Calu3 (cell line): ENCODE measurements at regions of chr10 and their contacts with region 1.

Region 1: GRCh38 chr10:60172363-60172990 is 217.2 kb downstream of the ANK3 start:
- DNase-seq: peak; percentile 52
- H3K4me3 Mint-ChIP-seq: no peak overlapping the region
- H3K27ac Mint-ChIP-seq: peak overlapping the region; percentile 67
- H3K4me1 Mint-ChIP-seq: peaks cover 64% of the 10 kb centered on the region
- H3K27me3 Mint-ChIP-seq: no peaks in the 10 kb centered on the region
- CTCF ChIP-seq: no peak

Region 2: GRCh38 chr10:59847326-59847725 is 325.2 kb before region 1 on chr10:
- CTCF ChIA-PET with region 1: no interaction called
- intact Hi-C with region 1: no loop called
- DNase-seq: no peak
- H3K4me3 Mint-ChIP-seq: no peak overlapping the region
- H3K27ac Mint-ChIP-seq: no peak overlapping the region
- H3K4me1 Mint-ChIP-seq: peaks cover 19% of the 10 kb centered on the region
- H3K27me3 Mint-ChIP-seq: no peaks in the 10 kb centered on the region
- CTCF ChIP-seq: no peak

Region 3: GRCh38 chr10:60123172-60124067 is 49.1 kb before region 1 on chr10:
- CTCF ChIA-PET with region 1: interaction called, 5 read pairs
- intact Hi-C with region 1: loop called (anchors 1 kb)
- DNase-seq: peak; percentile 60
- H3K4me3 Mint-ChIP-seq: peak overlapping the region; percentile 36
- H3K27ac Mint-ChIP-seq: peak overlapping the region; percentile 85
- H3K4me1 Mint-ChIP-seq: peaks cover 22% of the 10 kb centered on the region
- H3K27me3 Mint-ChIP-seq: no peaks in the 10 kb centered on the region
- CTCF ChIP-seq: no peak

Region 4: DNA sequence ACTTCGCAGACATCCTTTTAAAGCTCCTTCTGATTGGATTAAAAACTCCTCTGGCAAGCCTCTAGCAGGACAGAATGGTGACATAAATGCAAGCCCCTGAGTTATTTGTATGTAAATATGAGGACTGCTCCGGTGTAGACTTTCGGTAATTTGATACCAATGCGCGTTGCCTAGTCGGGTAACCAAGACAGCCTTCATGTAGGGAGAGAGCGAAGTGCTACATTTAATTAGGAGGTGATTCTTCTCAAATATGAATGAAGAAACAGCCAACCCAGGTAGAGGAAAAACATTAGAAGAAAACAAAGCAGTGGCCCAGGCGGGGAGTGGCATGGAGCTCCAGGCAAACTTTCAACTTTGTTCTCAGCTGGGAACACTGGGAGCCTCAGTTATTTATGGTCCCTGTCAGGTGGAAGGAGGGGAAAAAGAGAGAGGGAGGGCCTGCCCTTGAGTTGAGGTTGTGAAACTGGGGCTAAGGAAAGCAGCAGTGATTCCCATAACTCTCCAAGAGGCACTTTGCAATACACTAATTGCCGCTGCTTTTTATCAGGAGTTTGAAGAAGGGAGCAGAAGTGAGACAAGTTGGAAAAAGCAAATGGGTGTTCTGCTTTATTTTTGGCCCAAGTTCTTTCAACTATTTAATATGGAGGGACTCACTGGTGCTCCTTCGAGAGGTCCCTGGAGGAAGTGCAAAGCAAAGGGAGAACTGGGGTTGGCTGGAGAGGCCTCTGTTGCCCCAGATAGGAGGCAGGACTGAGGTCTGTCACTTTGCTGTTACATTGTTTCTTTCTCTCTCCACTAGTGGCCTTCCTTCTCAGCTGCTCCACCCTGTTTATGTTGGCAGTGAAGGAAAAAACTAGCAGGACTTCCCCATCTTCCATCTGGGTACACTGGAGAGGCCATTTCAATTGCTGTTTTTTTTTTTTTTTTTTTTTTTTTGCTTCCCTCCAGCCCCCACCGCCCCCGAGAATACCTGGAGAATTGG is 31.5 kb before region 1 on chr10:
- CTCF ChIA-PET with region 1: interaction called, 4 read pairs
- intact Hi-C with region 1: loop called (anchors 1 kb)
- DNase-seq: peak; percentile 57
- H3K4me3 Mint-ChIP-seq: no peak overlapping the region
- H3K27ac Mint-ChIP-seq: no peak overlapping the region
- H3K4me1 Mint-ChIP-seq: peaks cover 20% of the 10 kb centered on the region
- H3K27me3 Mint-ChIP-seq: no peaks in the 10 kb centered on the region
- CTCF ChIP-seq: peak; percentile 17

Region 5: GRCh38 chr10:60148264-60148840 is 24.1 kb before region 1 on chr10:
- CTCF ChIA-PET with region 1: no interaction called
- intact Hi-C with region 1: loop called (anchors 2 kb)
- DNase-seq: peak; percentile 68
- H3K4me3 Mint-ChIP-seq: peak overlapping the region; percentile 21
- H3K27ac Mint-ChIP-seq: peak overlapping the region; percentile 16
- H3K4me1 Mint-ChIP-seq: peaks cover 61% of the 10 kb centered on the region
- H3K27me3 Mint-ChIP-seq: no peaks in the 10 kb centered on the region
- CTCF ChIP-seq: no peak

Region 6: DNA sequence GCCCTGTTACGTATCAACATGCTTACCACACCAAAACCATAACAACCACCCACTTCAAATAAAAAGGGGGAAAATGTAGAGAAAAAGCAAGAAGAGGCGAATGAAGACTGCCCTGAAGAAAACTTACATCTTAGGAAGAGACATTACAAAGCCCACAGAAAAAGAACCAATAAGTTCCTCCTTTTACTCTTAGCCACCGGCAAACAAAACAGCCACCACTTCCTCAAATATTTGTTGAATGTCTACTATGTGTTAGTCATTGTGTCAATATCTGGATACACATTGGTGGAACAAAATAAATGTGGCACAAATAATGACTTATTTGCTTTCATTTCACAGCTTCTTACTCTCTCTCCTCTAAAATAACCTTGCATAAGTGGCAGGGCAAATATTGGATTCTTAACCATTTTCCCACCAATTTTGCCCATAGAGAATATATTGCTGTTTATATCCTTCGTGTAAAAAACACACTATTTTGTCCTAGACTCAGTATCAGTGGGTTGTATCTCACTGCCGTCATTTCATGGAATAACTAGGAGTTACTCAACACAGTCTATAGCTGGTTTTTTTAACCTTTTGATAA is 110.4 kb after region 1 on chr10:
- CTCF ChIA-PET with region 1: no interaction called
- intact Hi-C with region 1: no loop called
- DNase-seq: peak; percentile 49
- H3K4me3 Mint-ChIP-seq: peak overlapping the region; percentile 57
- H3K27ac Mint-ChIP-seq: peak overlapping the region; percentile 68
- H3K4me1 Mint-ChIP-seq: peaks cover 53% of the 10 kb centered on the region
- H3K27me3 Mint-ChIP-seq: no peaks in the 10 kb centered on the region
- CTCF ChIP-seq: no peak